Lower leg skin (tissue), 4 donors: ENCODE measurements at regions of chr2 and their contacts with region 1.

Region 1: DNA sequence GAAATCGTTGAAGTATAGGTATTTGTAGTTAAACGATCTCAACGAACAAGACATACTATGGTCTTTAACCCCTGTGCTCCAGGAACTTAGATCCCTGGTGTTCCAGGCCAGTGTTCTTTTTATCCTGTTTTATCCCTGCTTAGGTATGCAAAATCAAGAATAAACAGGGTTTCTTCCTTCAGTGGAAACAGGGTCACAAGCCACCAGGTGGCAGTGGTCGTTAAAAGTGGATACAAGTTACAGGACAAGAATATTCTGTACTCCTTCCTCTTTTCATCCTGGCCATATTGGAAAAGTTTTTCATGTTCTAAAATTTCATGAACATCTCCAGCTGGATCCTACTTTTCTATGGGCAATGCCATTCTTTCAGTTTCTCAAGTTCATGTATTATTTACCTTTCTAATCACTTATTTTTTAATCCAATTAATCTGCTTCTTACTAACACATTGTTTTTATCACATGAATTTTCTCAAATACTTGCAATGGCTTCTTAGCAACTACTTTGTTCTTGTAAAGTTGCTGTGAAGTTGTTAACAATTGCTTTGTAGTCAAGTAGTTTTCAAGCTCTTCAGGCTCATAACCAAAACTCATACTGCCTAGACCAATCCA is 16.4 kb upstream of the HNMT start:
- DNase-seq: peak; percentile 64 to 88
- H3K4me3 ChIP-seq: no peak overlapping the region
- CTCF ChIP-seq: no peak
- POLR2A ChIP-seq: no peak

Region 2: GRCh38 chr2:138020432-138020831 is 72.6 kb after region 1 on chr2:
- intact Hi-C with region 1: loop called (anchors 2 kb)
- DNase-seq: no peak
- H3K4me3 ChIP-seq: no peak overlapping the region
- CTCF ChIP-seq: no peak
- POLR2A ChIP-seq: no peak

Region 3: GRCh38 chr2:138090330-138090729 is 142.5 kb after region 1 on chr2:
- intact Hi-C with region 1: loop called (anchors 10 kb)
- DNase-seq: no peak
- H3K4me3 ChIP-seq: no peak overlapping the region
- CTCF ChIP-seq: no peak
- POLR2A ChIP-seq: no peak